Activated CD8-positive, alpha-beta T cell treated with anti-CD3 and anti-CD28 coated beads for 36 hours (primary cell): ENCODE measurements at regions of chr2 and their contacts with region 1.

Region 1: GRCh38 chr2:198296665-198297308 is 492.4 kb downstream of the PLCL1 start:
- DNase-seq: peak; percentile 75
- ATAC-seq: peak; percentile 78
- H3K4me3 Mint-ChIP-seq: no peak overlapping the region
- H3K27ac Mint-ChIP-seq: no peak overlapping the region
- H3K4me1 Mint-ChIP-seq: peaks cover 3% of the 10 kb centered on the region
- H3K27me3 Mint-ChIP-seq: peaks cover 2% of the 10 kb centered on the region
- CTCF ChIP-seq: peak; percentile 67

Region 2: GRCh38 chr2:197799068-197799467 is 497.7 kb before region 1 on chr2:
- CTCF ChIA-PET with region 1: interaction called, 20 read pairs
- POLR2A ChIA-PET with region 1: no interaction called
- intact Hi-C with region 1: loop called (anchors 2 kb)
- DNase-seq: no peak
- ATAC-seq: no peak
- H3K4me3 Mint-ChIP-seq: no peak overlapping the region
- H3K27ac Mint-ChIP-seq: no peak overlapping the region
- H3K4me1 Mint-ChIP-seq: peaks cover 13% of the 10 kb centered on the region
- H3K27me3 Mint-ChIP-seq: peaks cover 19% of the 10 kb centered on the region
- CTCF ChIP-seq: no peak

Region 3: GRCh38 chr2:197804049-197804757 is 492.6 kb before region 1 on chr2 and contains the start of gene PLCL1:
- CTCF ChIA-PET with region 1: interaction called, 20 read pairs
- POLR2A ChIA-PET with region 1: no interaction called
- intact Hi-C with region 1: loop called (anchors 2 kb)
- DNase-seq: peak; percentile 93
- ATAC-seq: peak; percentile 99
- H3K4me3 Mint-ChIP-seq: peak within 1 kb of the TSS; percentile 85
- H3K27ac Mint-ChIP-seq: peak within 1 kb of the TSS; percentile 71
- H3K4me1 Mint-ChIP-seq: peaks cover 40% of the 10 kb centered on the region
- H3K27me3 Mint-ChIP-seq: peaks cover 8% of the 10 kb centered on the region
- CTCF ChIP-seq: no peak
- total RNA-seq, gene PLCL1: 0.68 to 0.69 TPM

Region 4: GRCh38 chr2:198127627-198128026 is 169.2 kb before region 1 on chr2:
- CTCF ChIA-PET with region 1: interaction called, 26 read pairs
- POLR2A ChIA-PET with region 1: no interaction called
- intact Hi-C with region 1: loop called (anchors 5 kb)
- DNase-seq: peak; percentile 42
- ATAC-seq: peak; percentile 60
- H3K4me3 Mint-ChIP-seq: no peak overlapping the region
- H3K27ac Mint-ChIP-seq: no peak overlapping the region
- H3K4me1 Mint-ChIP-seq: no peaks in the 10 kb centered on the region
- H3K27me3 Mint-ChIP-seq: no peaks in the 10 kb centered on the region
- CTCF ChIP-seq: peak; percentile 68

Region 5: DNA sequence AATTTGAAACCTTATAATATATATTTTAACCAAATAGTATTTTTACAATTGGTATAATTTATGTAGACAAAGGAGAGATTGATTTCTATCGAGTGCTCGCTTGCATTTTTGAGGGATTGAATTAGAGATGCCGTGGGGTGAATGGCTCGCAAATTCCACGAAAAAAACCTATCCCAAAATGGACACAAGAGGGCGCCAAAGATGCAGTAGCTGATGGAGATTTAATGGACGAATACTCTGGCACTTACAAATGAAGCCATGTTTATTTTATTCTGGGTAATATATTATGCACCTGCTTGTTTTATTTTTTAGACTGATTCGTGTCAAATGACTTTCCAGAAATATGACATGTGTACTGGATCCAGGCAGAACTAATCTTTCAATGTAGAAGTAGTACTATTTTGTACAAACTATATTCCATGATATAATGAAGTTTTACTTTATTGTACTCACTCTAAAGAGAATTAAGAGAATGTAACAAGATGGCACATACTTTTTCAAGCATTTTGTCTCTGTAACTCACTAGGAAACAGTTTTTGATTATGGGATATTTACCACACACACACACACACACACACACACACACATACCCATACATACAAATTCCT is 13.0 kb after region 1 on chr2:
- CTCF ChIA-PET with region 1: interaction called, 33 read pairs
- POLR2A ChIA-PET with region 1: no interaction called
- intact Hi-C with region 1: no loop called
- DNase-seq: peak; percentile 71
- ATAC-seq: no peak
- H3K4me3 Mint-ChIP-seq: no peak overlapping the region
- H3K27ac Mint-ChIP-seq: no peak overlapping the region
- H3K4me1 Mint-ChIP-seq: no peaks in the 10 kb centered on the region
- H3K27me3 Mint-ChIP-seq: peaks cover 22% of the 10 kb centered on the region
- CTCF ChIP-seq: peak; percentile 71